SK-N-SH (cell line): ENCODE measurements at regions of chr6 and their contacts with region 1.

Region 1: GRCh38 chr6:106560996-106561685 is 68.2 kb downstream of the RTN4IP1 start:
- DNase-seq: no peak
- H3K4me3 ChIP-seq: no peak overlapping the region
- H3K27ac ChIP-seq: peak overlapping the region in 1 of 2 experiments; percentile 52; a peak in 1 of 4 replicates
- H3K4me1 ChIP-seq: peaks cover 0 to 5% of the 10 kb centered on the region in 2 experiments; a peak in 1 of 4 replicates
- H3K27me3 ChIP-seq: no peaks in the 10 kb centered on the region
- CTCF ChIP-seq: no peak
- EP300 ChIP-seq: no peak
- RAD21 ChIP-seq: no peak

Region 2: GRCh38 chr6:106163446-106163965 is 397.6 kb before region 1 on chr6:
- CTCF ChIA-PET with region 1: no interaction called
- POLR2A ChIA-PET with region 1: no interaction called
- DNase-seq: no peak
- H3K4me3 ChIP-seq: no peak overlapping the region
- H3K27ac ChIP-seq: no peak overlapping the region
- H3K4me1 ChIP-seq: peaks cover 0 to 21% of the 10 kb centered on the region in 2 experiments; a peak in 3 of 4 replicates
- H3K27me3 ChIP-seq: no peaks in the 10 kb centered on the region
- CTCF ChIP-seq: no peak
- EP300 ChIP-seq: no peak
- RAD21 ChIP-seq: no peak

Region 3: DNA sequence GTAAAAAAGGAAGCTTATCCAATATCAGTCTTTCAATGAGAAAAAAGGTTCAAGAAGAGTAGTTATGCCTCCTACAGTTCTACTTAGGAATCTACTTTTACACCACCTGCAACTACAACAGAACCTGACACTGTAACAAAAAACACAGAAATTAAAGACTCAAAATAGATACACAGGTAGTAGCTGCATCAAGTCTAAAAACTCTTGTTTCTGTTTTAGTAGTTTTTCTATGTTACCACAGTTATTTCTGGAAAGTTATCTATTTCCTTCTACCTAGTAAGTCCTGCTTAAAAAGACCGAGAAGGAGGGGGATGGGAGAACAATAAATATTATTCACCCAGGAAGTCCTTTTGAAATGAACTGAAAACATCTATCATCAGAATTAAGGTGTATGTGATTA is 288.1 kb before region 1 on chr6:
- CTCF ChIA-PET with region 1: no interaction called
- POLR2A ChIA-PET with region 1: no interaction called
- DNase-seq: no peak
- H3K4me3 ChIP-seq: no peak overlapping the region
- H3K27ac ChIP-seq: no peak overlapping the region
- H3K4me1 ChIP-seq: 0 out of 4 replicates have a peak, but pooled peaks cover 0 to 3% of the 10 kb centered on the region in 2 experiments
- H3K27me3 ChIP-seq: no peaks in the 10 kb centered on the region
- CTCF ChIP-seq: 0 out of 2 replicates have a peak, but pooled peaks have one; percentile 7
- EP300 ChIP-seq: no peak
- RAD21 ChIP-seq: no peak

Region 4: DNA sequence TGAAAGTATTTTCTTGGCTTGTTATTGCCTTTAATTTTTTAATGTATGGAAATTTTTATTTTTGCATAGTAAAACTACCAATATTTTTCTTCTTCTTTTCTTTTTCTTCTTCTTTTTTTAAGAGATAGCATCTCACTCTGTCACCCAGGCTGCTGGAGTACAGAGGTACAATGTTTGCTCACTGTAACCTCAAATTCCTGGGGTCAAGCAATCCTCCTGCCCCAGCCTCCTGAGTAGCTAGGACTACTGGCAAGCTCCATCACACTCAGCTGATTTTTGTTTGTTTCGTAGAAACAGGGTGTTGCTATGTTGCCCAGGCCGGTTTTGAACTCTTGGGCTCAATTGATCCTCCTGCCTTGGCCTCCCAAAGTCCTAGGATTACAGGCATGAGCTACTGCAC is 123.8 kb before region 1 on chr6:
- CTCF ChIA-PET with region 1: interaction called, 64 read pairs
- POLR2A ChIA-PET with region 1: no interaction called
- DNase-seq: no peak
- H3K4me3 ChIP-seq: no peak overlapping the region
- H3K27ac ChIP-seq: no peak overlapping the region
- H3K4me1 ChIP-seq: no peaks in the 10 kb centered on the region
- H3K27me3 ChIP-seq: peaks cover 29% of the 10 kb centered on the region
- CTCF ChIP-seq: no peak
- EP300 ChIP-seq: no peak
- RAD21 ChIP-seq: no peak

Region 5: GRCh38 chr6:106444777-106445507 is 116.2 kb before region 1 on chr6:
- CTCF ChIA-PET with region 1: interaction called, 64 read pairs
- POLR2A ChIA-PET with region 1: no interaction called
- DNase-seq: peak; percentile 67
- H3K4me3 ChIP-seq: no peak overlapping the region
- H3K27ac ChIP-seq: no peak overlapping the region
- H3K4me1 ChIP-seq: no peaks in the 10 kb centered on the region
- H3K27me3 ChIP-seq: peaks cover 20% of the 10 kb centered on the region
- CTCF ChIP-seq: peak; percentile 82
- EP300 ChIP-seq: no peak
- RAD21 ChIP-seq: peak; percentile 81

Region 6: DNA sequence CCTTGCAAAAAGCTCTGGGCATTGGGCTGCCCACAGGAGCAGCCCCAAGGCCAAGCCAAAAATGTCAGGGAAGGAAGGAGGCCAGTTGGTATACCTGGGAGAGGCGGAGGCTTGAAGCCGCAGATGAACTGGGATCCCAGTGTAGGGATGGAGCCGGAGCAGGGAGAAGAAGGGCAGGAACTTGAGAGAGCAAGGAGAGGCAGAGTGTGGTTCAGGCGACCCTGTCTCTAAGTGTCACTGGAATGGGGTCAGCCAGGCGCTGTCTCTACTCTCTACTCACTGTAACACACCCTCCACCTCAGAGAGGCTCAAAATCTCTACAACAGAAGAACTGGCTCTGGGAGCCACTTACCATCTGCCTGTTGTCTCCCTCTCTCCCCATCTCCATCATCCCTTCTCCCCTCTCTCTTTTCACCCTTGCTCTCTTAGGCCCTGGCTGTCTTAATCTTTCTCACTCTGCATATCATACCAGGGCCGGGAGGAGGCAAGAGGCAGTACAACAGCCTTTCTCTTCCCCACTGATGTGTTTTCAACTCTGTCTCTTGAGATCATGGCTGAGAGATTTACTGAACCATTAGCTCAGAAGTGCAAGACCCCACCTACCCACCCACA is 107.3 kb before region 1 on chr6:
- CTCF ChIA-PET with region 1: interaction called, 29 read pairs
- POLR2A ChIA-PET with region 1: no interaction called
- DNase-seq: no peak
- H3K4me3 ChIP-seq: no peak overlapping the region
- H3K27ac ChIP-seq: no peak overlapping the region
- H3K4me1 ChIP-seq: peaks cover 0 to 4% of the 10 kb centered on the region in 2 experiments; a peak in 1 of 4 replicates
- H3K27me3 ChIP-seq: no peaks in the 10 kb centered on the region
- CTCF ChIP-seq: no peak
- EP300 ChIP-seq: no peak
- RAD21 ChIP-seq: no peak

Region 7: DNA sequence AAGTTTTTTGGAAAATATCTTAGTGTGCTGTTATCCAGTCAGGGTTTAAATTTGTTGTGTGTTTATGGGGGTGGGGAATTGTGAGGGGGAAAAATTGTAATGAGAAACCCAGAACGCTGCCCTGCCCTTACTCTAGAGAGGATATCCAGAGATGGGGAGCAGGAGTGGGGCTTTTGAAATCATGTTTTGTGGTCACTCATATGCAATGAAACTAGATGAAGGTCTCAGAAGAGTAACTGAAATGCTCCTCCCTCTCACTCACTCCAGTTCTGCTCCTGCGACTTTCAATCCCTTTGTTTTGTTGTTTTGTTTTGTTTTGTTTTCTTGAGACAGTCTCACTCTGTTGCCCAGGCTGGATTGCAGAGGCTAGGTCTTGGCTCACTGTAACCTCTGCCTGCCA is 100.7 kb before region 1 on chr6:
- CTCF ChIA-PET with region 1: interaction called, 10 read pairs
- POLR2A ChIA-PET with region 1: no interaction called
- DNase-seq: no peak
- H3K4me3 ChIP-seq: no peak overlapping the region
- H3K27ac ChIP-seq: no peak overlapping the region
- H3K4me1 ChIP-seq: no peaks in the 10 kb centered on the region
- H3K27me3 ChIP-seq: no peaks in the 10 kb centered on the region
- CTCF ChIP-seq: no peak
- EP300 ChIP-seq: no peak
- RAD21 ChIP-seq: no peak

Region 8: GRCh38 chr6:106591111-106591825 is 30.1 kb after region 1 on chr6:
- CTCF ChIA-PET with region 1: interaction called, 18 read pairs
- POLR2A ChIA-PET with region 1: no interaction called
- DNase-seq: no peak
- H3K4me3 ChIP-seq: no peak overlapping the region
- H3K27ac ChIP-seq: peak overlapping the region; percentile 29 to 52; a peak in 3 of 4 replicates
- H3K4me1 ChIP-seq: no peaks in the 10 kb centered on the region
- H3K27me3 ChIP-seq: no peaks in the 10 kb centered on the region
- CTCF ChIP-seq: no peak
- EP300 ChIP-seq: no peak; a peak in 1 of 4 replicates
- RAD21 ChIP-seq: no peak

Region 9: DNA sequence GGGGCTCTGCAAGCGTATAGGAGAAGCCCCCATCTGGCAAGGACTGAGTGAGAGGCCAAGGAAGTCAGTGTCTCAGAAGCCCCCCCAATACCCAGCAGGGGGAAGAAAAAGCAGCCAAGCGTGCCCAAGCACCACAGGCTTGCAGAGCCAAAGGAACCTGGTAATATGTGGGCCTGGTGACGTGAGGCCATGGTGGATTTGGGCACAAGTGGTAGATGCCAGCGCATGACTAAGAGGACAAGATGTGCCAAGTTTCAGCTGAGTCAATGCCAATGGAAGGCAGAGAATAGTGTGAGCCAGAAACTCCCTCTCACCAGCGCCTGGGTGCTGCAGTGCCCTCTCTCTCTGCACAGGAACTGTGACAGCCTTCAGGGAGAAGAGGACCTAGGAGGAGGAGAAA is 178.2 kb after region 1 on chr6:
- CTCF ChIA-PET with region 1: no interaction called
- POLR2A ChIA-PET with region 1: no interaction called
- DNase-seq: no peak
- H3K4me3 ChIP-seq: no peak overlapping the region
- H3K27ac ChIP-seq: no peak overlapping the region
- H3K4me1 ChIP-seq: no peaks in the 10 kb centered on the region
- H3K27me3 ChIP-seq: no peaks in the 10 kb centered on the region
- CTCF ChIP-seq: no peak
- EP300 ChIP-seq: no peak
- RAD21 ChIP-seq: no peak